K562 (cell line): ENCODE measurements at regions of chr3 and their contacts with region 1.

Region 1: GRCh38 chr3:150428562-150428961 is 20.5 kb downstream of the TSC22D2 start:
- DNase-seq: no peak
- ATAC-seq: no peak
- H3K4me3 ChIP-seq: no peak overlapping the region
- H3K27ac ChIP-seq: no peak overlapping the region
- H3K4me1 ChIP-seq: peaks cover 0 to 39% of the 10 kb centered on the region in 2 experiments; a peak in 3 of 5 replicates
- H3K27me3 ChIP-seq: no peaks in the 10 kb centered on the region
- CTCF ChIP-seq: no peak
- EP300 ChIP-seq: no peak
- POLR2A ChIP-seq: no peak
- RAD21 ChIP-seq: no peak

Region 2: GRCh38 chr3:150443331-150443741 is 14.8 kb after region 1 on chr3:
- CTCF ChIA-PET with region 1: no interaction called
- POLR2A ChIA-PET with region 1: interaction called, 14 read pairs
- in situ Hi-C with region 1: no loop called
- intact Hi-C with region 1: no loop called
- DNase-seq: no peak
- ATAC-seq: no peak
- H3K4me3 ChIP-seq: no peak overlapping the region
- H3K27ac ChIP-seq: no peak overlapping the region
- H3K4me1 ChIP-seq: peaks cover 4 to 15% of the 10 kb centered on the region in 2 experiments; a peak in 4 of 5 replicates
- H3K27me3 ChIP-seq: no peaks in the 10 kb centered on the region
- CTCF ChIP-seq: no peak
- EP300 ChIP-seq: no peak
- POLR2A ChIP-seq: no peak
- RAD21 ChIP-seq: no peak